ENCODE measurements at regions of chr11 and their contacts with region 1.

Region 1: DNA sequence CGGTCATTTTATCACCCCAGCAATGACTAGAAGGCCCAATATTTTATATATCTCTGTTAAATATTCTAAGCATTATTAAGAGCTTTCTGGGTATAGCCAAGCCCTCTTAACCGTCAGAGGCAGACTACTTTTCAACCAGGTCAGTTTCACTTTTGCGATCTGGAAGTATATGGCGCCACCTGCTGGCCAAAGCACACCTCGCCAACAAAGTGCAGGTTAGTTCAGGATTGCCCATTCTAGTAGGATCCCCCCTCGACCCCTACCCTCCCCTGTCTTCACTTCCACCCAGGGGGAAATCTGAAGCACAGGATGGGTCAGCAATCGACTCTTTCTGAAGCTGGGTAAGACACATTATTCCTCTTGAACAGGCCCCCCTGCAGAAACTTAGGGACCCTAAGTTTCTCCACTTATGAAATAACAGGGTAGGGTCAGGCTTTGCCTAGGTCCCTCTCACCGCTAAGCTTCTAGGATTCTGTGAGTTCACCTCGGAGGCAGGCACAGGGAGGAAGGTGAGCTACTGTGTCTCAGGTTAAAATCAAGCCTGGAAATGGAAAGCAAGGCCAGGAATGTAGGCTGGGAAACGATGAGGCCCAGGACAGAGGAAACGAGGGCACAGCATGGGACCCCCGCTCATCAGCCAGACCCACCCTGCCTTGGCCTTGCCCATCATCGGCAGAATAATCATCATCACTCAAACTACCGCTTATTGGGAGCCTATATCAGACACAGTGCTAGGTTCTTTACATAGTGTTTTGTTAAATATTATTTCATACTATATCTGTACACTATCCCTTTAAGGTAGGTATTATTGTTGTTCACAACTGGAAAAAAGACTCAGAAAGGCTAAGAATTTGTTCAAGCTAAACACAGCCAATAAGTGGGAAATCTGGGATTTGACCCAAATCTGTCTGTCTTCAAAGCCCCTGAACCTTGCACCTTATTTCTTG is 35.6 kb downstream of the KCNJ1 start:
- DNase-seq: peak; percentile 68 to 89 (median 79)
- ATAC-seq: peak; percentile 32 to 79 (median 74)
- H3K4me3 ChIP-seq: peak overlapping the region in 7 of 12 donors; percentile 3 to 37 (median 28)
- H3K27ac ChIP-seq: peak overlapping the region in 3 of 12 donors; percentile 2 to 42 (median 28)
- H3K4me1 ChIP-seq: peaks cover 0 to 41% (median 18%) of the 10 kb centered on the region in 12 donors
- H3K27me3 ChIP-seq: no peaks in the 10 kb centered on the region
- CTCF ChIP-seq: peak; percentile 84 to 95 (median 92)
- POLR2A ChIP-seq: no peak

Region 2: GRCh38 chr11:128172046-128172878 is 659.2 kb before region 1 on chr11:
- intact Hi-C with region 1: loop called in 9 of 10 experiments (anchors 2 to 5 kb)
- DNase-seq: peak; percentile 74 to 83 (median 80)
- ATAC-seq: peak in 3 of 4 donors; percentile 77 to 85 (median 84)
- H3K4me3 ChIP-seq: no peak overlapping the region
- H3K27ac ChIP-seq: peak overlapping the region in 1 of 12 donors; percentile 19
- H3K4me1 ChIP-seq: peaks cover 0 to 8% (median 0%) of the 10 kb centered on the region in 12 donors
- H3K27me3 ChIP-seq: peaks cover 0 to 7% (median 0%) of the 10 kb centered on the region in 9 donors
- CTCF ChIP-seq: peak; percentile 50 to 91 (median 80)
- POLR2A ChIP-seq: no peak

Region 3: GRCh38 chr11:128299132-128299726 is 532.2 kb before region 1 on chr11:
- intact Hi-C with region 1: loop called in 5 of 10 experiments (anchors 5 to 10 kb)
- DNase-seq: no peak
- ATAC-seq: peak in 3 of 4 donors; percentile 30 to 38 (median 30)
- H3K4me3 ChIP-seq: no peak overlapping the region
- H3K27ac ChIP-seq: peak overlapping the region; percentile 3 to 76 (median 50)
- H3K4me1 ChIP-seq: peaks cover 0 to 54% (median 29%) of the 10 kb centered on the region in 12 donors
- H3K27me3 ChIP-seq: no peaks in the 10 kb centered on the region
- CTCF ChIP-seq: no peak
- POLR2A ChIP-seq: no peak

Region 4: GRCh38 chr11:128552783-128553661 is 278.4 kb before region 1 on chr11:
- intact Hi-C with region 1: loop called in 1 of 10 experiments (anchors 10 kb)
- DNase-seq: no peak
- ATAC-seq: peak in 2 of 4 donors; percentile 20 to 45
- H3K4me3 ChIP-seq: peak overlapping the region in 1 of 12 donors; percentile 8
- H3K27ac ChIP-seq: peak overlapping the region in 10 of 12 donors; percentile 6 to 63 (median 38)
- H3K4me1 ChIP-seq: peaks cover 0 to 66% (median 31%) of the 10 kb centered on the region in 12 donors
- H3K27me3 ChIP-seq: no peaks in the 10 kb centered on the region
- CTCF ChIP-seq: no peak
- POLR2A ChIP-seq: no peak

Region 5: DNA sequence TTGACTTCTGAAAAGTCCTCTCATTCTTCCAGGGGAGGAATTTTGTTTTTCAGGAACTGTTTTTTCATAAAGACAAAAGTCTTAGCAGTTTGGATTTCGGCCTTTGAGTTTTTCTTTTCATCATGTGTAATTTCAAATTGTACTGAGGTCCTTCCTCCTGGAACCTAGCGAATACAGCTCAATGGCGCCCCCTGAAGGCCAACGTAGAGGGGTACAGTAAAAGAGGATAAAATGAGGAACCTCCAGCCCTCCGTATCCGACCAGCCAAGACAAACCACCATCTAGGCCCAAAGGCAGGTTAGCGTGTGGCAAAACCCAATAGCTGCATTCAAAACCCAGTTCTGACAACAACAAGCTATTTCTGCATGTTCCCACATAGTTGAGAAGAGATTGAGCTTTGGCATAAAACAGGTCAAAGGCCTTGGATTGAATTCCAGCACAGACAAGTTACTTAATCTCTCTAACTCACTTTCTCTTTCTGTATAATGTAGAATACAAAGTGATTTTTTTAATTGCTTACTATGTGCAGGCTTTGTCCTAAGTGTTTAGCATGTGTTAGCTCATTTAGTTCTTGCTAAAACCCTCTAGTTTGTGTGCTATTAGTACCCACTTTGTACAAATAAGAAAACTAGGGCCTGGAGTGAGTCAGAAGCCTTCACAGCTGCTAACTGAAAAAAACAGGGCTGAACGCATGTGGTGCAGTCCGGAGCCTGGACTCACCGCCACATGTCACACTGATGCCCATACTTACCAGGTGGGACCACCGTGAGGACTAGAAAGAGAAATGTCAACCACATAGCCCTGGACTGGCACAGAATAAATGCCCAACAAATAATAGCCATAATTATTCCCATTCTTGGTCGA is 200.8 kb before region 1 on chr11:
- intact Hi-C with region 1: loop called in 9 of 10 experiments (anchors 2 to 5 kb)
- DNase-seq: peak; percentile 86 to 94 (median 88)
- ATAC-seq: peak; percentile 74 to 93 (median 88)
- H3K4me3 ChIP-seq: no peak overlapping the region
- H3K27ac ChIP-seq: peak overlapping the region in 3 of 12 donors; percentile 12 to 80 (median 38)
- H3K4me1 ChIP-seq: peaks cover 0 to 48% (median 10%) of the 10 kb centered on the region in 12 donors
- H3K27me3 ChIP-seq: no peaks in the 10 kb centered on the region
- CTCF ChIP-seq: peak; percentile 82 to 94 (median 90)
- POLR2A ChIP-seq: no peak

Region 6: DNA sequence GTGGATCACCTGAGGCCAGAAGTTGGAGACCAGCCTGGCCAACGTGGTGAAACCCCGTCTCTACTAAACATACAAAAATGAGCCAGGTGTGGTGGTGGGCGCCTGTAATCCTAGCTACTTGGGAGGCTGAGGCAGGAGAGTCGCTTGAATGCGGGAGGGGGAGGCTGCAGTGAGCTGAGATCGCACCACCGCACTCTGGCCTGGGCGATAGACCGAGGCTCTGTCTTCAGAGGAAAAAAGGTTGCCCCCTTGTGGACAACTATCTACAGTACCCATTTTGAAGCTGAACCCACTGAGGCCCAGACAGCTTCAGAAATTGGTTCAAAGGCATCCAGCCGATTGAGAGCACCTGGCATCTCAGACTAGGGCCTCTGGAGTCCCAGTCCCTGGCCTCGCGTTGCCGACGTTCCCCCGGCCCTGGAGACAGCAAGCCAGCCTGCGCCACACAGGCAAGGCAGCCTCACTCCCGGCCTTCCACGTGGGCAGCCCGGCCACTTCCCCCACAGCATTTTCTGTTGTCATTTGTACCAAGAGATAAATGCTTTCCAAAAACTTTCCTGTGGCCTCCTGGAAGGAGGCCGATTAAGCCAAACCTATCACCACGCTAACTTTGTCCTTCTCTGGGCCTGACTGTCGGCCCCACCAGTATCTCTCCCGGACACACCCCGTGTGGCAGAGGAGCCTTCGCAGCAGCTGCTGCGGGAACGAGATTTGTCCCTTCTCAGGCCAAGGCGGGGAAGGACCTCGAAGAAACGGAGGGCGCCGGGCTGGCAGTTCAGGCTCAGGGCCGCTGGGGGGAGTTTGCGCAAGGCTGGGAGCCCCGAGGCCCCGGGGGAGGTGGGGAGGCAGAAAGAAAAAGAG is 54.8 kb before region 1 on chr11:
- intact Hi-C with region 1: loop called in 4 of 10 experiments (anchors 5 kb)
- DNase-seq: peak; percentile 61 to 81 (median 67)
- ATAC-seq: peak; percentile 47 to 76 (median 53)
- H3K4me3 ChIP-seq: peak overlapping the region in 2 of 12 donors; percentile 19 to 25
- H3K27ac ChIP-seq: peak overlapping the region in 5 of 12 donors; percentile 25 to 60 (median 42)
- H3K4me1 ChIP-seq: peaks cover 0 to 52% (median 31%) of the 10 kb centered on the region in 12 donors
- H3K27me3 ChIP-seq: no peaks in the 10 kb centered on the region
- CTCF ChIP-seq: peak; percentile 23 to 72 (median 44)
- POLR2A ChIP-seq: no peak